AG04450 (cell line): ENCODE measurements at regions of chr10 and their contacts with region 1.

Region 1: DNA sequence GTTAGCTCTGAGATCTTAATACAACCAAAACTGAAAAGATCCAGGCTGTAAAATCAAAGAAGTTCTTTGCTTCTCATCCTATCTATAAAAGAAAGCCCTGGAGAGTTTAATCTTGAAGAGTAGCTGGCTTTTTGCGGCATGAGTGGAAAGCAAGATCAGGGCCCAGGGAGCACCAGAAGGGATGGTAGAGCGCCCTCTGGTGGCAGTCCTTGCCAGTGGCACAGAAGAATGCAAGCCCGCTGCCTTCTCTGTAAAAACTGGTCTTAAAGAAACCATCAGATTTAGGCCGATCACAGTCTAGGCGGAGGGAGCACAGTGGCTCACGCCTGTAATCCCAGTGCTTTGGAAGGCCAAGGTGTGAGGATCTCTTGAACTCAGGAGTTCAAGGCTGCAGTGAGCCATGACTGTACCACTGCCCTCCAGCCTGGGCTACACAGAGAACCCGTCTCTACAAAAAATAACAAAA is 35.6 kb downstream of the CPN1 start:
- DNase-seq: peak; percentile 68
- H3K4me3 ChIP-seq: no peak overlapping the region
- H3K27ac ChIP-seq: no peak overlapping the region
- H3K27me3 ChIP-seq: no peaks in the 10 kb centered on the region
- CTCF ChIP-seq: peak; percentile 97

Region 2: DNA sequence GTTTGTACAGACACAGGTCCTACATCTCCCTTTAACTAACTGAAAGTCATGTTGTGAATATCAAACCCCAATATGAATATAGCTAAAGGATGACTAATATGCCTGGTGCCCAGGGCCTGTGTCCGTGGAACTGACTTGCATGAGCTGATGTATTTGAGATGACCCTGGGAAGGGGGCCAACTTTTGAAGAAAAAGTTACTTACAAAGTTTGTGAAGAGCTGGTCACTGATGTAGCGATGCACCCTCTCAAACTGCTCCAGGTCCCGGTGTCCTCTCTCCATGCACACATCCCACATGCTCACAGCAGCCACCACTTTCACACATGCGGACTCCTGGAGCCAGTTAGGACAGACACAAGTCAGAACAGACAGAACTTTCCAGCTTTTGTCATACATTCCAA is 157.4 kb before region 1 on chr10:
- CTCF ChIA-PET with region 1: interaction called, 11 read pairs
- POLR2A ChIA-PET with region 1: no interaction called
- DNase-seq: no peak
- H3K4me3 ChIP-seq: no peak overlapping the region
- H3K27ac ChIP-seq: no peak overlapping the region
- H3K27me3 ChIP-seq: no peaks in the 10 kb centered on the region
- CTCF ChIP-seq: no peak

Region 3: GRCh38 chr10:99966306-99966705 is 79.7 kb before region 1 on chr10:
- CTCF ChIA-PET with region 1: interaction called, 17 read pairs
- POLR2A ChIA-PET with region 1: no interaction called
- DNase-seq: no peak
- H3K4me3 ChIP-seq: no peak overlapping the region
- H3K27ac ChIP-seq: no peak overlapping the region
- H3K27me3 ChIP-seq: no peaks in the 10 kb centered on the region
- CTCF ChIP-seq: no peak

Region 4: GRCh38 chr10:99983280-99983988 is 62.6 kb before region 1 on chr10:
- CTCF ChIA-PET with region 1: interaction called, 15 read pairs
- POLR2A ChIA-PET with region 1: no interaction called
- DNase-seq: no peak
- H3K4me3 ChIP-seq: peak overlapping the region; percentile 36
- H3K27ac ChIP-seq: peak overlapping the region; percentile 84
- H3K27me3 ChIP-seq: no peaks in the 10 kb centered on the region
- CTCF ChIP-seq: no peak

Region 5: GRCh38 chr10:100009793-100010676 is 36.0 kb before region 1 on chr10 and contains the start of gene DNMBP:
- CTCF ChIA-PET with region 1: interaction called, 24 read pairs
- POLR2A ChIA-PET with region 1: no interaction called
- DNase-seq: no peak
- H3K4me3 ChIP-seq: peak within 1 kb of the TSS; percentile 94
- H3K27ac ChIP-seq: peak within 1 kb of the TSS; percentile 62
- H3K27me3 ChIP-seq: no peaks in the 10 kb centered on the region
- CTCF ChIP-seq: no peak; the same call in 1 of the 2 replicates
- polyA plus RNA-seq, gene DNMBP: 16.1 and 18.2 TPM in 2 replicates

Region 6: GRCh38 chr10:100072514-100072913 is 26.5 kb after region 1 on chr10:
- CTCF ChIA-PET with region 1: no interaction called
- POLR2A ChIA-PET with region 1: no interaction called
- DNase-seq: no peak
- H3K4me3 ChIP-seq: no peak overlapping the region
- H3K27ac ChIP-seq: no peak overlapping the region
- H3K27me3 ChIP-seq: peaks cover 15% of the 10 kb centered on the region
- CTCF ChIP-seq: no peak

Region 7: GRCh38 chr10:100174699-100175677 is 128.9 kb after region 1 on chr10:
- CTCF ChIA-PET with region 1: interaction called, 11 read pairs
- POLR2A ChIA-PET with region 1: no interaction called
- DNase-seq: no peak
- H3K4me3 ChIP-seq: no peak overlapping the region
- H3K27ac ChIP-seq: no peak overlapping the region
- H3K27me3 ChIP-seq: no peaks in the 10 kb centered on the region
- CTCF ChIP-seq: no peak

Region 8: DNA sequence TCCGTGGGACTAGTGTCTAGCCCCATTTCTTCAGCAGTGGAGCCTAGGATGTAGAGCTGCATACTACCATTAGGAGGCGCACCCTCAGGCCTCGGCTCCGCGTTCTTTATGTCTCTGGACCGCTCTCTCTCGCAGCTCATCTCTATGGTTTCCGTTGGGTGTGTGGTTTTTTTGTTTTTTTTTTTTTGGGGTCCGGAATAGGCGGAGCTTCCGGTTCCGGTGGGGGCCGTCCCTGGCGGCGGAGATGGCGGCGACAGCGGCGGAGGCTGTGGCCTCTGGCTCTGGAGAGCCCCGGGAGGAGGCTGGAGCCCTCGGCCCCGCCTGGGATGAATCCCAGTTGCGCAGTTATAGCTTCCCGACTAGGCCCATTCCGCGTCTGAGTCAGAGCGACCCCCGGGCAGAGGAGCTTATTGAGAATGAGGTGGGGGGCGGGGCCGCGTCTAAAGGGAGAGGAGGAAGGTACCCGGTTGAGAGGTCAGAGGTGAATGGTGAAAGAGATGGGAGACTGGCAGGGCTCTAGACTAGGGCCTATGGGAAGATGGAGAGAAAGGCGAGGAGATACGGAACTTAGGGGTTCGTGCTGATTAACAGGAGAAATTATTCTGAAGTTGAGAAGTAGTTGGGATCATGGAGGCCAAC is 489.8 kb after region 1 on chr10 and contains the start of gene HIF1AN:
- CTCF ChIA-PET with region 1: no interaction called
- POLR2A ChIA-PET with region 1: no interaction called
- DNase-seq: peak; percentile 89
- H3K4me3 ChIP-seq: peak within 1 kb of the TSS; percentile 88
- H3K27ac ChIP-seq: no peak within 1 kb of the TSS
- H3K27me3 ChIP-seq: no peaks in the 10 kb centered on the region
- CTCF ChIP-seq: peak; percentile 98
- polyA plus RNA-seq, gene HIF1AN: 29.7 and 31.0 TPM in 2 replicates